Activated T-helper 2 cell treated with anti-CD3 and anti-CD28 coated beads, Interferon-gamma antibody, Interleukin-2, Interleukin-4, amounts not matched to agents 10 μg/mL and 5 μg/mL and 100 μg/mL, durations not matched to agents 14 hours and 24 hours and 36 hours (primary cell): ENCODE measurements at regions of chr9 and their contacts with region 1.

Region 1: DNA sequence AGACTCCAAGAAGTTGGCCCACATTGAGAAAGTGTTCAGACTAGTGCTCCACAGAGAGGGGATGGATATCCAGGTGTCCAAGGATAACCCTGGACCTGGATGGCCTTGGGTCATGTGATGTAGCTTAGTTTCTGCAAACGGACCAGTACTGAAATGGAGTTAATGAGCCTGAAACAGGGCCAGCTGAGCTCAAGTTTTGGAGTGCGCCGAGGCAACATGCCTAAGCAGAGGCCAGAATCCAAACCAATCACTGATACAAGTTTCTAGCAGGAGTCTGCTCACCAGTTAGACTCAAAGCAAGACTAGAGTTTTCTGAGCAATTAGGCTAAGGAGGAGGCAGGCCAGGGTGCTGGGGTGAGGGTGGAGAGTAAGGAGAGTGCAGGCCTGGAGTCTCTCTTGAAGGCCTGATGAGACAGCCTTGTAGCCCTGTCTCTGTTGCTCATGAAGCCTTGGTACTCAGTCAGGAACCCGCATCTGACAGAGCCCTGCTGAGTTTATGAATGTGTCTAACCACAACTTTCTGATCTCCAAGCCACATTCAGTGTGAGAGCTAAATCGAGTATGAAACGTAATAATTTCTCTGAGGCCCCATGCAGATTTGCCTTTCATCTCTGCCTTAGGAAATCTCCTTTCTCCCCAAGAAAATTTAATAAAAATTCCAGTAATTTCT is 68.9 kb upstream of the EQTN start:
- DNase-seq: peak; percentile 46
- H3K4me3 Mint-ChIP-seq: no peak overlapping the region
- H3K27ac Mint-ChIP-seq: peak overlapping the region; percentile 51
- H3K4me1 Mint-ChIP-seq: peaks cover 32% of the 10 kb centered on the region
- H3K27me3 Mint-ChIP-seq: peaks cover 12% of the 10 kb centered on the region

Region 2: GRCh38 chr9:26946753-26947727 is 418.8 kb before region 1 on chr9 and contains the start of gene PLAA:
- intact Hi-C with region 1: loop called (anchors 5 kb)
- DNase-seq: peak; percentile 83
- H3K4me3 Mint-ChIP-seq: peak within 1 kb of the TSS; percentile 95
- H3K27ac Mint-ChIP-seq: peak within 1 kb of the TSS; percentile 100
- H3K4me1 Mint-ChIP-seq: peaks cover 47% of the 10 kb centered on the region
- H3K27me3 Mint-ChIP-seq: no peaks in the 10 kb centered on the region
- total RNA-seq, gene PLAA: 36.4 and 42.0 TPM in 2 replicates

Region 3: DNA sequence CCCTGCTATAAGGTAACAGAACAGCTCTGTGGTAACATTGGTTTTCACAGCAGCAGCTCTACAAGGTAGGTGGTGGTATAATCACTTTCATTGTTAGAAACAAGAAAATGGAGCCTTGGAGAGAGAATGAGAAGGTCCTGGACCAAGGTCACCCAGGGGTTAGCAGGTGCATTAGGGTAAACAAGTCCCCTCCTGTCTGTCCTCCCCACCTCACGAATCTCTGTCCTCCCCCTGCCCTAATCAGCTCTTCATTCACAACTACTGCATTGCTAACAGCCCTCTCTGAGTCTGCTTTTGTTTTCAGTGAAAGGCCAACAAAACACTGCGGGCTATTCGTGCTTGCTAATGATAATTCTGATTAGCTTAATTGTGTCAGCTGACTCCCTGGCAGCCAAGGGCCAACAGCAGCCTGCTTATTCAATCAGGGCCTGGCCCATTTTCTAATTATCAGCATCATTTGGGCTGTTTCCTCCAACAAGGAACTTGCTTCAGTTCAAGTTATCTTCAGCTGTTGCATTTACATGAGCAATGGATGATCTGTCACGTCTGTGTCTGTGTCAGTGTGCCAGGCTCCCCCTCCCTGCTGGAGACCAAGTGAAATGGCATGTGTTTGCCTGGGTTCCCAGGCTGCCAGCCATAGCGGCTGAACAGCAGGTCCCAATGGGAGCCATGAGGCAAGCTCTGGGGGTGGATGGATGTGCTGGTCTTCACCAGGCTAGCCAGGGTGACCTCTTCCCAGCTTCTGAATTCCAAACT is 12.2 kb before region 1 on chr9:
- intact Hi-C with region 1: loop called (anchors 1 kb)
- DNase-seq: no peak
- H3K4me3 Mint-ChIP-seq: no peak overlapping the region
- H3K27ac Mint-ChIP-seq: no peak overlapping the region
- H3K4me1 Mint-ChIP-seq: peaks cover 41% of the 10 kb centered on the region
- H3K27me3 Mint-ChIP-seq: no peaks in the 10 kb centered on the region

Region 4: GRCh38 chr9:27379311-27380251 is 13.7 kb after region 1 on chr9:
- intact Hi-C with region 1: loop called (anchors 1 kb)
- DNase-seq: peak; percentile 37
- H3K4me3 Mint-ChIP-seq: no peak overlapping the region
- H3K27ac Mint-ChIP-seq: no peak overlapping the region
- H3K4me1 Mint-ChIP-seq: peaks cover 18% of the 10 kb centered on the region
- H3K27me3 Mint-ChIP-seq: peaks cover 10% of the 10 kb centered on the region

Region 5: GRCh38 chr9:27499481-27499880 is 133.6 kb after region 1 on chr9:
- intact Hi-C with region 1: loop called (anchors 1 kb)
- DNase-seq: no peak
- H3K4me3 Mint-ChIP-seq: no peak overlapping the region
- H3K27ac Mint-ChIP-seq: peak overlapping the region; percentile 5
- H3K4me1 Mint-ChIP-seq: peaks cover 15% of the 10 kb centered on the region
- H3K27me3 Mint-ChIP-seq: no peaks in the 10 kb centered on the region